Sigmoid colon (tissue), 7 donors: ENCODE measurements at regions of chr2 and their contacts with region 1.

Region 1: DNA sequence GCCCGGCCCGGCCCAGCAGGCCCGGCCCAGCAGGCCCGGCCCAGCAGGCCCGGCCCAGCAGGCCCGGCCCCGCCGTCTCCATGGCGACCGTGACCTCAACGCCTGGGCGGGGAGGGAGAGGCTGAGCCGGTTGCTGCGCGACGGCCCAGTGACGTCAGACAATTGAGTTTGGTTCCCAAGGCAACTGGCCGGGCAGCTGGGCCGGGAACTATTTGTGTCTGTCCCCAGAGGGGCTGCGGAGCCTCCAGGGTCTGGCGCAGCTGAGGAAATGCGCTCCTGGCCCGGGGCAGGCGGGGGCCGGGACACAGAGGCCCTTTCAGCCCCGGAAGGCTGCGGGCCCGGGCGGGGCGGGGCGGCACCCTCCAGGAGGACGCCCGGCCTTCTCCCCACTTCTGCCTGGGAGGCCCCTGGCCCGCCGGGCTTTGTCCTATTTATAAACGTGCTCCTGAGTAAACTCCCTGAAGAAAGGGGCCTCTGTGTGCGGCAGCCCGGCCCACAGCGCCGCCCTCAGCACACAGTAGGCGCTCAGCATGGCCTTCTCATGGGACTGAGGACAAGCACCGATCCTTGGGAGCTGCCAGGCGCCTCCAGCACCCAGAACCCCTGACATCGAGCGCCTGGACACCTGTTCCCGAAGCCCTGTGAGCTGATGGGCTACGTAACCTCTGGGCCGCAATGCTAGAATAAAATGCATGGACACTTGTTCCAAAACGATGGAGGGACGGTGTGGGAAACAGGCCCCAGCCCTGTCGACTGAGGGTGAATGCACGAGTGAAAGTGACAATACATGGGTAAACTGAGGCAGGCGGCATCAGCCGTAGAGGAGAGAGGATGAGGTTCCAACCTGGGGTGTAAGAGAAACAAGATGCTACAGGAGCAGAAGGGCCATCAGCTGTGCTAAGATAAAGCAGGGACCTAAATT is 12.3 kb downstream of the TEX44 start:
- DNase-seq: peak; percentile 100
- H3K4me3 ChIP-seq: peak overlapping the region; percentile 51 to 62 (median 58)
- H3K27ac ChIP-seq: peak overlapping the region; percentile 98 to 100 (median 99)
- H3K4me1 ChIP-seq: peaks cover 2 to 68% (median 51%) of the 10 kb centered on the region in 4 donors
- H3K27me3 ChIP-seq: no peaks in the 10 kb centered on the region
- CTCF ChIP-seq: no peak
- EP300 ChIP-seq: peak; percentile 82 to 97 (median 90)
- POLR2A ChIP-seq: peak; percentile 48 to 61

Region 2: GRCh38 chr2:231463698-231464575 is 141.0 kb before region 1 on chr2 and contains the start of gene NCL:
- intact Hi-C with region 1: loop called (anchors 5 kb)
- DNase-seq: peak; percentile 99
- H3K4me3 ChIP-seq: peak within 1 kb of the TSS; percentile 83 to 93 (median 90)
- H3K27ac ChIP-seq: peak within 1 kb of the TSS; percentile 94 to 99 (median 98)
- H3K4me1 ChIP-seq: peaks cover 0 to 43% (median 31%) of the 10 kb centered on the region in 4 donors
- H3K27me3 ChIP-seq: no peaks in the 10 kb centered on the region
- CTCF ChIP-seq: no peak
- EP300 ChIP-seq: no peak
- POLR2A ChIP-seq: peak; percentile 94 to 98
- total RNA-seq, gene NCL: 100 to 227 (median 126) TPM

Region 3: GRCh38 chr2:231563378-231563961 is 41.5 kb before region 1 on chr2:
- intact Hi-C with region 1: loop called (anchors 2 kb)
- DNase-seq: peak; percentile 77
- H3K4me3 ChIP-seq: no peak overlapping the region
- H3K27ac ChIP-seq: no peak overlapping the region
- H3K4me1 ChIP-seq: no peaks in the 10 kb centered on the region
- H3K27me3 ChIP-seq: no peaks in the 10 kb centered on the region
- CTCF ChIP-seq: peak; percentile 13 to 70 (median 40)
- EP300 ChIP-seq: no peak
- POLR2A ChIP-seq: no peak